AG04449 (cell line): ENCODE measurements at regions of chr19 and their contacts with region 1.

Region 1: GRCh38 chr19:6125571-6125989 is 9.9 kb upstream of the ACSBG2 start:
- DNase-seq: no peak
- H3K4me3 ChIP-seq: no peak overlapping the region
- CTCF ChIP-seq: peak; percentile 89

Region 2: GRCh38 chr19:5987077-5987818 is 138.3 kb before region 1 on chr19:
- CTCF ChIA-PET with region 1: interaction called, 35 read pairs
- POLR2A ChIA-PET with region 1: no interaction called
- DNase-seq: peak; percentile 34
- H3K4me3 ChIP-seq: peak overlapping the region; percentile 42
- CTCF ChIP-seq: peak; percentile 72

Region 3: DNA sequence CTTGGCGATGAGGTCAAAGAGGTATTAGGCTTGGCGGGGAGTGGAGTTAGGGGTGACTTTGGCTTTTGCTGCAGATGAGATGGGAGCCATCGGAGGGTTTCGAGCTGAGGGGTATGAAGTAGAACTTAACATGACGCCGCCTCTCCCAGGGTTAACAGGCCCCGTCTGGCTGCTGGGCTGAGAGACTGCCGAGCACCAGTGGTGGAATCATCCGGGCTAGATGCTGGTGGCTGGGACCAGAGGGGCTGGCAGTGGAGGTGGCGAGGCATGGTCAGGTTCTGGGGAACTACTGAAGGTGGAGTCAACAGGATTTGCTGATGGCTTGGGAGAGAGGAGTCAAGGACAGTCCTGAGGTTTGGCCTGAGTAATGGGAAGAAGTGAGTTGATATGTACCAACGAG is 20.1 kb before region 1 on chr19:
- CTCF ChIA-PET with region 1: interaction called, 78 read pairs
- POLR2A ChIA-PET with region 1: no interaction called
- DNase-seq: no peak
- H3K4me3 ChIP-seq: no peak overlapping the region
- CTCF ChIP-seq: no peak

Region 4: GRCh38 chr19:6138066-6138465 is 12.5 kb after region 1 on chr19:
- CTCF ChIA-PET with region 1: interaction called, 35 read pairs
- POLR2A ChIA-PET with region 1: no interaction called
- DNase-seq: no peak
- H3K4me3 ChIP-seq: no peak overlapping the region
- CTCF ChIP-seq: no peak

Region 5: GRCh38 chr19:6354098-6354674 is 228.6 kb after region 1 on chr19:
- CTCF ChIA-PET with region 1: interaction called, 12 read pairs
- POLR2A ChIA-PET with region 1: no interaction called
- DNase-seq: no peak
- H3K4me3 ChIP-seq: no peak overlapping the region
- CTCF ChIP-seq: peak; percentile 27